ENCODE measurements at regions of chr12 and their contacts with region 1.

Region 1: GRCh38 chr12:3670083-3670620 is 82.8 kb downstream of the CRACR2A start:
- DNase-seq: no peak
- H3K4me3 Mint-ChIP-seq: no peak overlapping the region
- H3K27ac Mint-ChIP-seq: no peak overlapping the region
- H3K4me1 Mint-ChIP-seq: peaks cover 9% of the 10 kb centered on the region
- H3K27me3 Mint-ChIP-seq: no peaks in the 10 kb centered on the region

Region 2: DNA sequence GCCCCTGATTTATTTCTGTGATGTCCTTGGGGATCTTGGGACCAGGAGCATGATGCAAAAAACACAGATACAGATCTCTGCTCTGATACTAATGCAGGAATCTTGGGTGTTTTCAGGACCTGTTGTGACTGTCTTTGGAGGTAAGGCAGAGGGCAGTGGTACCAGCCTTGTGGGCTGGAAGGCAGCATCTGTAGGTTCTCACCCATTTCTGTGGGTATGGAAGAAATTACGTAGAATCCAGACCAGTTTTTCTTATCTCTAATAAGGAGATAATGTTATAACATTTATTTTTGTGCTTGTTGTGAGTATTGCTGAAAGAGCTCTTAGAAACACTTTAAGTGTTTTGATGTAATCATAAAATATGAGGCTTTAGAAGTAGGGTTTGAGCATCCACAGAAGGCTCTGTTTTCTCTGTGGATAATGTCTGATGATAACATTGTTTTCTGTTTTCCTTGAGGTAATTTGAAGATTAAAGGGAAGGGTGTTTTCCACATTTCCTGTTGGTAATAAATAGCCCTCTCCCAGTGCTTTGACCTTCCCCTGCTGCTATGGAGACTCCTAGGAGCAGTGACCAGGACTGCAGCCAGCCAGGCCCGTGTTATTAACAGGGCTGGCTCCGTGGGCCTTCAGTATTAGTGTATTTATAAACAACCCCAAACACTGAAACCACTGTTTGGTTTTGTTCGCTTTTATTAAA is 1656.5 kb before region 1 on chr12:
- intact Hi-C with region 1: no loop called
- DNase-seq: no peak
- H3K4me3 Mint-ChIP-seq: no peak overlapping the region
- H3K27ac Mint-ChIP-seq: no peak overlapping the region
- H3K4me1 Mint-ChIP-seq: peaks cover 3% of the 10 kb centered on the region
- H3K27me3 Mint-ChIP-seq: peaks cover 17% of the 10 kb centered on the region

Region 3: GRCh38 chr12:3520168-3520567 is 150.0 kb before region 1 on chr12:
- intact Hi-C with region 1: no loop called
- DNase-seq: no peak
- H3K4me3 Mint-ChIP-seq: no peak overlapping the region
- H3K27ac Mint-ChIP-seq: no peak overlapping the region
- H3K4me1 Mint-ChIP-seq: no peaks in the 10 kb centered on the region
- H3K27me3 Mint-ChIP-seq: peaks cover 6% of the 10 kb centered on the region

Region 4: GRCh38 chr12:3604748-3605586 is 65.2 kb before region 1 on chr12:
- intact Hi-C with region 1: no loop called
- DNase-seq: no peak
- H3K4me3 Mint-ChIP-seq: no peak overlapping the region
- H3K27ac Mint-ChIP-seq: no peak overlapping the region
- H3K4me1 Mint-ChIP-seq: no peaks in the 10 kb centered on the region
- H3K27me3 Mint-ChIP-seq: peaks cover 27% of the 10 kb centered on the region

Region 5: DNA sequence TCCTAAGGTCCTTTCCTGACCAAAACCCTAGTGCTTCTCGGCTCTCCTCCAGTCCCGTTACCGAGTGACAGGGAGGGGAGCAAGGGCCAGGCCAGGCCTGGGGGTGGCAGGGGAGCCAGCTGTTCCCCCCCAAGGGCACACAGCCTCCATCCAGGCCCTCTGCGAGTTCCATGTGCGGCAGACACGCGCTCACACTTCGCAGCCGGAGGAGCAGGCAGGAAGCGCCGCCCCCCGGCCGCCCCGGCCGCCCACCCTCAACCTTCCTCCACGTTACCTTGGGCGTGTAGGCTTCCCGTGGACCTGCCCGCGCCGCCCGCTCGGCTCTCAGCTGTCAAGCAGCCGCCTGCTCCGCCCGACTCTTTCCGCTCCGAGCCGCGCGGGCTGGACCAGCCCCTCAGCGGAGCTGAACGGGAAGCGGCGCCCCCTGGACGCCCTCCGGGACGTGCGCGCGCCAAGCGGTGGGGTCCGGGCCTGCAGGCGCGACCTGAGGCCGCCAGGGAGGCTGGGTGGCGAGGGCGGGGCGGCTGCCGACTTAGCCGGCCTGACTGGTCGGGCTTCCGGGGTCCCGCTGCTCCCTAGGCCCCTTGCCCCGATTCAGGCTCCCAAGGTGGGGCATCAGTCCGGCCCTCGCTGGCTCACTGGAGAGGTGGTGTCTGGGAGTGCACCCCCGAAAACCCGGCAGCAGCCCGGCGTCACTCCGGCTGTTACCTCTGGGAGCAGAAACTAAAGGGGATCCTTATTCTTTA is 82.8 kb after region 1 on chr12 and contains the start of gene CRACR2A:
- intact Hi-C with region 1: loop called (anchors 5 kb)
- DNase-seq: peak; percentile 82
- H3K4me3 Mint-ChIP-seq: peak within 1 kb of the TSS; percentile 98
- H3K27ac Mint-ChIP-seq: peak within 1 kb of the TSS; percentile 98
- H3K4me1 Mint-ChIP-seq: peaks cover 43% of the 10 kb centered on the region
- H3K27me3 Mint-ChIP-seq: no peaks in the 10 kb centered on the region
- total RNA-seq, gene CRACR2A: 24.6 and 25.2 TPM in 2 replicates